WTC11 (cell line): ENCODE measurements at regions of chr18 and their contacts with region 1.

Region 1: GRCh38 chr18:59697236-59697932 is at the start of gene CCBE1:
- DNase-seq: peak; percentile 92
- ATAC-seq: peak; percentile 80
- H3K4me3 Mint-ChIP-seq: peak within 1 kb of the TSS; percentile 72
- H3K27ac Mint-ChIP-seq: no peak within 1 kb of the TSS
- H3K4me1 Mint-ChIP-seq: peaks cover 72% of the 10 kb centered on the region
- H3K27me3 Mint-ChIP-seq: peaks cover 64% of the 10 kb centered on the region
- CTCF ChIP-seq: peak; percentile 95
- total RNA-seq, gene CCBE1: 8.0 to 9.7 TPM (median 9.7 TPM) in 3 replicates

Region 2: DNA sequence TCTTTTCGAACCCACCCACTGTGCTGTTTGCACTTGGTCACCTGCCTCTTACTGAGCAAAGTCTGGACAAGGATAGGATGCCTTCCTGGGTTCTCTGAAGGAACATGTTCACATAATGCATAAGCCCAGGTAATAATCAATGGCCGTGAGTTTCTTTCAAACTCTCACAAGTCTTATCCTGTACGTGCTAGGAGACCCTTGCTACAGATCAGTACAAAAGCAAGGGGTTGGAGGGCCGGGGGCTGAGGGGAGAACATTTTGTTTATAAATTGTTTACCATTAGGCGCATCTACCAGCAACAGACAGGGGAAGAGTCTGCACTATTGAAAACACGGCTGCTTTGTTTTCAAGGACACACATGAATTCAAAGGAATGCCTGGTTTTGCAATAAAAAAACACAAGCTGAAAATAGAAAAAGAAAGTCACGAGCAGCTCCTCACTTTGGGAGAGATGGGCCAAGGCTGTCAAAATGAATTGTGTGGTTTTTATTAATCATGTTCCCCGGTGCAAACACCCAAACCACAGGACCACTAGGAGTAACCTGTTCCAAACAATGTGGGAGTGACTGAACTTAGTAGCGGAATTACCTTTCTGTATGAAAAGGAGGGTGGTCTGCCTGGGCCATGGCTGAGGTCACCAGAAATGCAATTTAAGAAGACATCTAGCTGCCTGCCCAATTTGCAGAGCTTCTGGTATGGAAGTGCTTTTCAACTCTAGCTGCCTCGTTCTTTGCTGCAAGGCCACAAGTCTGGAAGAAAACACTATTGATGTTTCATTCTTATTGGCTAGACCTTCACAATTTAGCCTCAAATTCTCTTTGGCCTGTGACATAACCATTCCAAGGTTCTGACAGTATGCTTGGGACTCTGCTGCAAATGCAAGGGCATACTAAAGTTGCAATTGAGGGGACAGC is 73.7 kb before region 1 on chr18:
- CTCF ChIA-PET with region 1: interaction called, 11 read pairs
- POLR2A ChIA-PET with region 1: no interaction called
- DNase-seq: no peak
- ATAC-seq: no peak
- H3K4me3 Mint-ChIP-seq: no peak overlapping the region
- H3K27ac Mint-ChIP-seq: no peak overlapping the region
- H3K4me1 Mint-ChIP-seq: 0 out of 2 replicates have a peak, but pooled peaks cover 6% of the 10 kb centered on the region
- H3K27me3 Mint-ChIP-seq: no peaks in the 10 kb centered on the region
- CTCF ChIP-seq: no peak

Region 3: DNA sequence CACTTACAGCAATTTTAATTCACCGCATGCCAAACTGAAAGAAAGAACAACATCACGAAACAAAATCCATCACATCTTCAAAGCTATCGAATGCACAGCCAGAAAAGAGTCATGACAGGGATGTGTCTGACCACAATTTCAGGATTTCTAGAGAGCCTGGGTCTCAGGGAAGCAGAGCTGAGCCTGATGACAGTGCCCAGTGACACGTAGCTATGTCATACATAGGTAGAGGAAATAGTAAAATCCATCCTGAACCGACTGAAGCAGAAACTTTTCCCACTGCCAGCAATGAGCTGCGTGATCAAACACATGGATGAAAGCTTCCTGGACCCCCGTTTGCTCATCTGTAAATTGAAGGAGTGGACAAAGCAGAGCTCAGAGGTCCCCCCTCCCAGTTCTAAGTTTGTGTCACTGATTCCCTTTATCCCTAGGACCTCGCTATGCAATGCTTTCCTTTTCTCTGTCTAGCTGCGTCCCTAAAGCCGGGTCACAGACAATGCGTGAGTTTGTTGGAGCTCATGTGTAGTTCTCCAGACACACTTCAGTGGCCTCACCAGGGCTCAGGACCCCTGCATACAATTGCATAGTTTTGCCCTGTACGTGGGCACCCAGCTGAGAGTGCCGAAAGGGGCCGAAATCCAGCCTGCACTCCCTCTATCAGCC is 37.7 kb before region 1 on chr18:
- CTCF ChIA-PET with region 1: interaction called, 26 read pairs
- POLR2A ChIA-PET with region 1: no interaction called
- DNase-seq: no peak
- ATAC-seq: peak; percentile 48
- H3K4me3 Mint-ChIP-seq: no peak overlapping the region
- H3K27ac Mint-ChIP-seq: no peak overlapping the region
- H3K4me1 Mint-ChIP-seq: peaks cover 6% of the 10 kb centered on the region; the same call in 1 of the 2 replicates
- H3K27me3 Mint-ChIP-seq: no peaks in the 10 kb centered on the region
- CTCF ChIP-seq: no peak

Region 4: DNA sequence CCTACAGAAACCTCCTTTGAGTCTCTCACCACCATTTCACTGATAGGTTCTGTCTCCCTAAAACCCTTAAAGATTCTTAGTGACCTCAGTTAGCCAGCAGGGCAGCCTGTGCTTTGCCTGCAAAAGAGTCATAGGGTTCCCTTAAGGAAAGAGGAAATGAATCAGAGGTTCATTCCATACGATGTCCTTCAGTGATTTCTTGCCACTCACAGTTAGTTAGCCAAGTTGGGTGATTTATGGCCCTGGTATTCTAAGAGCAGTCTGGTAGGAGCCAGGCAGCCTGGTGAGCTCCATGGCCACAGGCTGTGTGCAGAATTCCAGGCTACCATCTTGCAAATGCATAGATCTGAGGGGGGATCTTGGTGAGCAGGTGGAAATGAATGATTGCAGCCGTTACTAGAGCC is 18.6 kb after region 1 on chr18:
- CTCF ChIA-PET with region 1: interaction called, 72 read pairs
- POLR2A ChIA-PET with region 1: no interaction called
- DNase-seq: no peak
- ATAC-seq: no peak
- H3K4me3 Mint-ChIP-seq: no peak overlapping the region
- H3K27ac Mint-ChIP-seq: no peak overlapping the region
- H3K4me1 Mint-ChIP-seq: peaks cover 9% of the 10 kb centered on the region
- H3K27me3 Mint-ChIP-seq: no peaks in the 10 kb centered on the region
- CTCF ChIP-seq: no peak

Region 5: GRCh38 chr18:59783138-59783537 is 85.8 kb after region 1 on chr18:
- CTCF ChIA-PET with region 1: interaction called, 30 read pairs
- POLR2A ChIA-PET with region 1: no interaction called
- DNase-seq: peak; percentile 42
- ATAC-seq: peak; percentile 94
- H3K4me3 Mint-ChIP-seq: no peak overlapping the region
- H3K27ac Mint-ChIP-seq: peak overlapping the region; percentile 41
- H3K4me1 Mint-ChIP-seq: peaks cover 6% of the 10 kb centered on the region
- H3K27me3 Mint-ChIP-seq: no peaks in the 10 kb centered on the region
- CTCF ChIP-seq: no peak

Region 6: GRCh38 chr18:59837586-59837985 is 140.2 kb after region 1 on chr18:
- CTCF ChIA-PET with region 1: interaction called, 11 read pairs
- POLR2A ChIA-PET with region 1: no interaction called
- DNase-seq: peak; percentile 57
- ATAC-seq: peak; percentile 58
- H3K4me3 Mint-ChIP-seq: no peak overlapping the region
- H3K27ac Mint-ChIP-seq: no peak overlapping the region
- H3K4me1 Mint-ChIP-seq: peaks cover 43% of the 10 kb centered on the region
- H3K27me3 Mint-ChIP-seq: no peaks in the 10 kb centered on the region; the same call in 1 of the 2 replicates
- CTCF ChIP-seq: peak; percentile 87